Heart left ventricle (tissue), 16 donors: ENCODE measurements at regions of chr17 and their contacts with region 1.

Region 1: DNA sequence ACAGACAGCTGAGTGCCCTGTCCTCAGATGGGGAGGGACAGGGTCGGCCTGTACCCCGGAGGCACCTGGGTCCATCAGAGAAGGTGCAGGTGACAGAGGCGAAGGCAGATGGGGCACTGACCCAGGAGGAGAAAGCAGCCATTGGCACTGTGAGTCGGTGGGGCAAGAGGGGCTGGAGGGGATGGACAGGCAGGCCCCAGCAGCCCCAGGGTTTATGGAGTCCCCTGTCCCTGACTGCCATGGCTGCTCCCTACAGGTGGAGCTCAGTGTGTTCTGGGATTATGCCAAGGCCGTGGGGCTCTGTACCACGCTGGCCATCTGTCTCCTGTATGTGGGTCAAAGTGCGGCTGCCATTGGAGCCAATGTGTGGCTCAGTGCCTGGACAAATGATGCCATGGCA is 32.1 kb downstream of the ANKRD40 start:
- DNase-seq: no peak
- ATAC-seq: peak in 2 of 4 donors; percentile 34 to 50
- H3K4me3 ChIP-seq: no peak overlapping the region
- H3K27ac ChIP-seq: no peak overlapping the region
- H3K4me1 ChIP-seq: peaks cover 0 to 7% (median 0%) of the 10 kb centered on the region in 12 donors
- H3K27me3 ChIP-seq: no peaks in the 10 kb centered on the region
- CTCF ChIP-seq: no peak
- POLR2A ChIP-seq: no peak

Region 2: DNA sequence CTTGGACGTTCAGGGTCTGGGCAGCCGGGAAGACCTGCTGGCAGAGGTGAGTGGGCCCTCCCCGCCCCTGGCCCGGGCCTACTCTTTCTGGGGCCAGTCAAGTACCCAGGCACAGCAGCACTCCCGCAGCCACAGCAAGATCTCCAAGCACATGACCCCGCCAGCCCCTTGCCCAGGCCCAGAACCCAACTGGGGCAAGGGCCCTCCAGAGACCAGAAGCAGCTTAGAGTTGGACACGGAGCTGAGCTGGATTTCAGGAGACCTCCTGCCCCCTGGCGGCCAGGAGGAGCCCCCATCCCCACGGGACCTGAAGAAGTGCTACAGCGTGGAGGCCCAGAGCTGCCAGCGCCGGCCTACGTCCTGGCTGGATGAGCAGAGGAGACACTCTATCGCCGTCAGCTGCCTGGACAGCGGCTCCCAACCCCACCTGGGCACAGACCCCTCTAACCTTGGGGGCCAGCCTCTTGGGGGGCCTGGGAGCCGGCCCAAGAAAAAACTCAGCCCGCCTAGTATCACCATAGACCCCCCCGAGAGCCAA is 49.5 kb before region 1 on chr17:
- intact Hi-C with region 1: loop called in 7 of 10 experiments (anchors 2 to 5 kb)
- DNase-seq: peak; percentile 71 to 82 (median 77)
- ATAC-seq: peak; percentile 48 to 86 (median 82)
- H3K4me3 ChIP-seq: no peak overlapping the region
- H3K27ac ChIP-seq: no peak overlapping the region
- H3K4me1 ChIP-seq: peaks cover 0 to 19% (median 4%) of the 10 kb centered on the region in 12 donors
- H3K27me3 ChIP-seq: peaks cover 0 to 39% (median 9%) of the 10 kb centered on the region in 9 donors
- CTCF ChIP-seq: peak; percentile 74 to 88 (median 80)
- POLR2A ChIP-seq: no peak

Region 3: DNA sequence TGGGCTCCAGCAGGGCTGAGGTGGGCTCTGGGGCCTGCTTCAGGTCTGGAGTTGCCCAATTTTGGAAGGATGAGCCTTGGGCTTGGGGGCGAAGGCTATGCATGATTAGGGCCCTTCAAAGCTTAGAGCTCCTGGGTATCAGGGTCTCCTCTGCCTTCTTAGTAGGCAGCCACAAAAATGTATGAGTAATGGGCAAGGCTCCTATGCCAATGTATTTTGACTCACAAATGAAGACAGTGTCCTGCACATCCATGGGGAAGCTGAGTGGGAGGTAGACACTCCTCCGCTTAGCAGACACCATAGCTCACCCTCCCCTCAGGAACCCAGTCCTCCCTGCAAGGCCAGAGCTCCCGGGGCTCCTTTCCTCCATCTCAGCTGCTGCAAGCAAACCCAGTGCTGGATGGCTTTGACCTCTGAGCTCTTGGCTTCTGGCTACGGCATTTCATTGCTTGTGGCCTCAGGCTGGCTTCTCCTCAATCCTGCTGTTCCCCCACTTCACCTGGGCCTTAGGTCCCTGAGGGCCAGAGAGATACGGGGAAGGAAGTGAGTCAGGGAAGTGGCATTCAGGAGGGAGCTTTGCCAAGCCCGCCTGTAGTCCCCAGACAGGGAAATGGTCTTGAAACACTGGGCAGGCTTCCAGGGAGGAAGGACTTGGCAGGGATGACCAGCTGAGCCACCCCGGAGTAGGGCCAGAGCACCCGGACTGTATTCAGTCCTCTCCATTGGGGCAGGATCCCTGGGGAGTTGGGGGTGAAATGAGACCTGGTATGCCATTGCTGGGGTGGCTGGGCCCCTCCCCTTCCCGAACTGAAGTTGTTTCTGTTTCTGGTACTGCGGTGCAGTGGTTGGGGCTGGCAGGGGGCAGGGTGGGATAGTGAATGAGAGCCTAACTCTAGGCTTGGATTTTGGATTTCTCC is 36.5 kb before region 1 on chr17:
- intact Hi-C with region 1: loop called in 6 of 10 experiments (anchors 2 to 5 kb)
- DNase-seq: peak; percentile 87 to 95 (median 90)
- ATAC-seq: peak; percentile 79 to 89 (median 84)
- H3K4me3 ChIP-seq: no peak overlapping the region
- H3K27ac ChIP-seq: peak overlapping the region in 4 of 12 donors; percentile 6 to 77 (median 20)
- H3K4me1 ChIP-seq: peaks cover 5 to 66% (median 25%) of the 10 kb centered on the region in 12 donors
- H3K27me3 ChIP-seq: peaks cover 6 to 28% (median 21%) of the 10 kb centered on the region in 9 donors
- CTCF ChIP-seq: no peak
- POLR2A ChIP-seq: no peak